ENCODE measurements at regions of chr18 and their contacts with region 1.

Region 1: DNA sequence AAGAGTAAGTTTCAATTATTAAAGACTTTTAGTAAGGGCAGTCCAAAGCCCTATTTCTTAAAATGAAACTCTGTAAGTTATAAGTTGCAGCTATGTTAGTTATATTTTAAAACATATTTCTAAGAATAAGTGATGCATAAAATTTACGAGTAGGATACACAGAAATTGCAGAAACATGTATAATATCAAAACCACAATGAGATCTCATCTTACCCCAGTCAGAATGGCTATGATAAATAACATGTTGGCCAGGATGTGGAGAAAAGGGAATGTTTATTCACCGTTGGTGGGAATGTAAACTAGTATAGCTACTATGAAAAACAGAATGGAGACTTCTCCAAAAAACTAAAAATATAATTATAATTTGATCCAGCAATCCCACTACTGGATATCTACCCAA is 201.2 kb downstream of the CBLN2 start:
- DNase-seq: no peak
- H3K4me3 Mint-ChIP-seq: no peak overlapping the region
- H3K27ac Mint-ChIP-seq: no peak overlapping the region
- H3K4me1 Mint-ChIP-seq: no peaks in the 10 kb centered on the region
- H3K27me3 Mint-ChIP-seq: no peaks in the 10 kb centered on the region

Region 2: GRCh38 chr18:72360628-72361027 is 17.7 kb after region 1 on chr18:
- intact Hi-C with region 1: loop called (anchors 2 kb)
- DNase-seq: no peak
- H3K4me3 Mint-ChIP-seq: no peak overlapping the region
- H3K27ac Mint-ChIP-seq: no peak overlapping the region
- H3K4me1 Mint-ChIP-seq: no peaks in the 10 kb centered on the region
- H3K27me3 Mint-ChIP-seq: no peaks in the 10 kb centered on the region

Region 3: DNA sequence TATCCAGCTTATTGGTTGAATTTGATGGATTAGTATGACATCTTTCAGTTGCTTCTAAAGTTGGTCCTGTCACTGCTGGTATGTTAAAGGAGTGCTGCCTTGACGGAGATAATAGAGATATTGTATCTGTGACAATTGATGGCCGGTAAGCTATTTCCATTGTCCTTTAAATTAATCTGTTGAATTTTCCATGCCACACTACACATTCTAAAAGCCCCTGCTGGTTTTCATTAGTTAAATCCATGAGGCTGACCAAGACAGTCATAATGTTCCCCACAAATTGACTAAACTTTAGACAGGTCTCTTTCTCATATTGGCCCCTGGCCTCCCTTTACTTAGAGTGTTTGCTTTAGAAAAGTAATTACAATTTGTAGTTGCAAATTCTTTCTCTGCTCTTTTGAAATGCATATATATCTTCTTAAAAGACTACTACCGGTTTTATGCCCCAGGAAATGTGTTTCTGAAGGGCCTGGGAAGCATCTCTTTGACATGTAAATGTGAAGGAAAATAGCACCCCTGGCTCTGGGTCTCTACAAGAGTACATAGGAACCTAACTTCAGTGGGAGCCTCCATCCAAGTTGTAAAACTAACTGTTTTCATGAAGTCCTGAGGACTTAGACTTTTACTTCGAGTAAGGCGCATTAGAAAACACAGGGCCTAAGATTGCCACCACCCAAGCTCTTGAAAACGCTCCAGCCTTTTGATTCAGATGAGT is 101.7 kb after region 1 on chr18:
- intact Hi-C with region 1: no loop called
- DNase-seq: no peak
- H3K4me3 Mint-ChIP-seq: no peak overlapping the region
- H3K27ac Mint-ChIP-seq: no peak overlapping the region
- H3K4me1 Mint-ChIP-seq: no peaks in the 10 kb centered on the region
- H3K27me3 Mint-ChIP-seq: no peaks in the 10 kb centered on the region

Measured in activated T-helper 1 cell treated with anti-CD3 and anti-CD28 coated beads, Interleukin-12 subunit alpha, Interleukin-12 subunit beta, Interleukin-2, Interleukin-4 antibody, amounts not matched to agents 30 ng/mL and 10 ng/mL and 1 ng/mL, durations not matched to agents 14 hours and 24 hours and 36 hours (primary cell).